Activated CD8-positive, alpha-beta T cell treated with anti-CD3 and anti-CD28 coated beads, Interleukin-2, amount 10 ng/mL, durations not matched to agents 7 days and 5 days (primary cell): ENCODE measurements at regions of chr9 and their contacts with region 1.

Region 1: DNA sequence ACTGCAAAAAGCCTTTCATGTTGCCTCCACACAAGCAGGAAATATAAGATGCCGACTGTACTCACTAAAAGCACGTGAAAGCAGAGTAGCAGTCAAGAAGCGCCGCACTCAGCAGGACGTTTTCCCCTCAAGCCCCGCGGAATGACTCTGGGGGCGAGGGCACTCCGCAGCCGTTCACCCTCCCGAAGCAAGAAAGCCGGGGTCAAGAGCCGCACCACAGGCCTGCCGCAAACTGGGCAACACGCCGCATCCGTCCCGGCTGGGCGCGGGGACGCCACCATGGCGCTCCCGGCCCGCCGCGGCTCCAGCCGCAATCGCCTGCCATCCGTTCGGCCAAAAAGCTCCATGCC is 364 bp downstream of the RPS6 start:
- DNase-seq: peak; percentile 53
- ATAC-seq: peak; percentile 50
- H3K4me3 Mint-ChIP-seq: peak overlapping the region; percentile 97
- H3K27ac Mint-ChIP-seq: peak overlapping the region; percentile 98
- H3K4me1 Mint-ChIP-seq: peaks cover 46% of the 10 kb centered on the region
- H3K27me3 Mint-ChIP-seq: no peaks in the 10 kb centered on the region

Region 2: DNA sequence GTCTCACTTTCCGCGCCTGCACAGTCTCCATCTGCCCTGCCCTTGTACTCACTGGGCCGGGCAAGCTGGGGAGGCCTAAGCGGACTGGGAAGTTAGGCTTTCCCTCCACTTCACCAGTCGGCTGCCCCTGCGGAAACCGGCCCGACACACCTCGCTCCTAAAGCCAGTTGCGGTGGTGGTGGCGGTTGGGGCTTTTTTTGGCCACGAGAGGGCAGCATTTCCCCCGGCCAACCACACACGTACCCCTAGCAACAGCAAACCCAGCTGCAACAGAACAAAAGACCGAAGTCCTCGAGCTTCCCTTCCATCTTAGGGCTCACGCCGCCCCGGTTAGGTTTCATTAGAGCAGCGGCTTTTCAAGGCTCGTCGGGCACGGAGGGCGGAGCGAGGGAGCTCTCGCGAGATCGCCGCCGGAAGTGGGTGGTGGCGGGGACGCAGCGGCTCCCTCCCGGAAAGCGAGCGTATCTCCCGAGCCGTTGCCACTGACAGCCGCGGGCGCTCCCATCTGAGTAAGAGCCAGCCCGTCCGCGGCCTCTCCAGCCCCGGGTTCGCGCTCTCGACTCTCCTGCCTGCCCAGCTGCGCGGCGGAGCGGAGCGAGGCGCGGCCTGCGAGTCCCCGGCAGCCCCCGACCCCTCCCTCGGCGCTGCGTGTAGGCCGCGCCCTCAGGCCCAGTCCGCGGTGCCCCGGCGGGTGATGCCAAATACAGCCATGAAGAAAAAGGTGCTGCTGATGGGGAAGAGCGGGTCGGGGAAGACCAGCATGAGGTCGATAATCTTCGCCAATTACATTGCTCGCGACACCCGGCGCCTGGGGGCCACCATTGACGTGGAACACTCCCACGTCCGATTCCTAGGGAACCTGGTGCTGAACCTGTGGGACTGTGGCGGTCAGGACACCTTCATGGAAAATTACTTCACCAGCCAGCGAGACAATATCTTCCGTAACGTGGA is 330.4 kb before region 1 on chr9 and contains the start of gene RRAGA:
- CTCF ChIA-PET with region 1: no interaction called
- POLR2A ChIA-PET with region 1: interaction called, 17 read pairs
- DNase-seq: peak; percentile 95
- ATAC-seq: peak; percentile 92
- H3K4me3 Mint-ChIP-seq: peak within 1 kb of the TSS; percentile 90
- H3K27ac Mint-ChIP-seq: peak within 1 kb of the TSS; percentile 99
- H3K4me1 Mint-ChIP-seq: peaks cover 30% of the 10 kb centered on the region
- H3K27me3 Mint-ChIP-seq: no peaks in the 10 kb centered on the region
- total RNA-seq, gene RRAGA: 44.7 to 46.0 TPM

Region 3: GRCh38 chr9:19074836-19075235 is 304.8 kb before region 1 on chr9:
- CTCF ChIA-PET with region 1: no interaction called
- POLR2A ChIA-PET with region 1: no interaction called
- DNase-seq: no peak
- ATAC-seq: no peak
- H3K4me3 Mint-ChIP-seq: no peak overlapping the region
- H3K27ac Mint-ChIP-seq: no peak overlapping the region
- H3K4me1 Mint-ChIP-seq: no peaks in the 10 kb centered on the region
- H3K27me3 Mint-ChIP-seq: no peaks in the 10 kb centered on the region

Region 4: DNA sequence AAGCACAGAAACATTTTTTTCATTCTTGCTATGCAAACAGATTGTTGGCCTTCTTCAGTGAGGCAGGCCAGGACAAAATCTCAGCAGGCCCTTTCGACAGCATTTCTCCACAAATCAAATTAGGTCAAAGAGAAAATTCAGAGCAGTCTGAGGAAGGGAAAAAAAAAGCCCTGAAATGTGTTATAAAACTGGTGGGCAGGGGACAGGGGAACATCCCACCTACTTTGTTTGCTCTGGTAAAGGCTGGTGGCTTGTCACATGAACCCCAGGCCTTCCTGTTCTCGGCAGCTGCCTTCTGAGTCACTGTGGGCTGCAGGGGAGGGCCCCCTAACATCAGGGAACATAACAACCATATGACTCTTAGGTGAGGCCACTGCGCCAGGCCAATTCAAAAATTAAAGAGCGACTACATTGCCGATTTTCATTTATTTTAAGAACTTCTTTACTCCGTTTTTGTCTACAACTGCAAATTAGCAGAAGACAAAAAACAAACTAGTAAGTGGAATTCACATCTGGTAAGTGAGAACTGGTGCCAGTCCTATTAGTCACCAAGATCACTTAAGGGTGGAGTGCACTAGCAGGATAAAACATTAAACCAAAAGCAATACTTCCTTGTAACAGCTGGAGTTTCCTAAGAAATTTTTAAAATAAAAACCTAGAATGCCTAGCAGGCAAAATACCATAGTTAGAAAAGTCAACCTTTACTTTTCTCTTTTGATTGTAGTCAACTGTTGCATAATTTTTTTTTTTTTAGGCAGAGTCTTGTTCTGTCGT is 195.3 kb before region 1 on chr9:
- CTCF ChIA-PET with region 1: no interaction called
- POLR2A ChIA-PET with region 1: interaction called, 10 read pairs
- DNase-seq: peak; percentile 90
- ATAC-seq: peak; percentile 100
- H3K4me3 Mint-ChIP-seq: peak overlapping the region; percentile 60
- H3K27ac Mint-ChIP-seq: peak overlapping the region; percentile 94
- H3K4me1 Mint-ChIP-seq: peaks cover 27% of the 10 kb centered on the region
- H3K27me3 Mint-ChIP-seq: no peaks in the 10 kb centered on the region

Region 5: GRCh38 chr9:19408693-19409400 is 29.2 kb after region 1 on chr9 and contains the start of gene ACER2:
- CTCF ChIA-PET with region 1: no interaction called
- POLR2A ChIA-PET with region 1: interaction called, 13 read pairs
- DNase-seq: peak; percentile 94
- ATAC-seq: peak; percentile 95
- H3K4me3 Mint-ChIP-seq: peak within 1 kb of the TSS; percentile 93
- H3K27ac Mint-ChIP-seq: peak within 1 kb of the TSS; percentile 81
- H3K4me1 Mint-ChIP-seq: peaks cover 21% of the 10 kb centered on the region
- H3K27me3 Mint-ChIP-seq: peaks cover 8% of the 10 kb centered on the region
- total RNA-seq, gene ACER2: 1.7 to 2.6 TPM